Activated CD8-positive, alpha-beta memory T cell treated with anti-CD3 and anti-CD28 coated beads, Interleukin-2, amount 10 ng/mL, durations not matched to agents 7 days and 5 days (primary cell): ENCODE measurements at regions of chr6 and their contacts with region 1.

Region 1: GRCh38 chr6:43143235-43144124 is 27.6 kb upstream of the SRF start:
- DNase-seq: peak; percentile 85
- ATAC-seq: peak; percentile 97
- H3K4me3 Mint-ChIP-seq: no peak overlapping the region
- H3K27ac Mint-ChIP-seq: peak overlapping the region; percentile 50
- H3K4me1 Mint-ChIP-seq: peaks cover 18% of the 10 kb centered on the region
- H3K27me3 Mint-ChIP-seq: peaks cover 3% of the 10 kb centered on the region

Region 2: DNA sequence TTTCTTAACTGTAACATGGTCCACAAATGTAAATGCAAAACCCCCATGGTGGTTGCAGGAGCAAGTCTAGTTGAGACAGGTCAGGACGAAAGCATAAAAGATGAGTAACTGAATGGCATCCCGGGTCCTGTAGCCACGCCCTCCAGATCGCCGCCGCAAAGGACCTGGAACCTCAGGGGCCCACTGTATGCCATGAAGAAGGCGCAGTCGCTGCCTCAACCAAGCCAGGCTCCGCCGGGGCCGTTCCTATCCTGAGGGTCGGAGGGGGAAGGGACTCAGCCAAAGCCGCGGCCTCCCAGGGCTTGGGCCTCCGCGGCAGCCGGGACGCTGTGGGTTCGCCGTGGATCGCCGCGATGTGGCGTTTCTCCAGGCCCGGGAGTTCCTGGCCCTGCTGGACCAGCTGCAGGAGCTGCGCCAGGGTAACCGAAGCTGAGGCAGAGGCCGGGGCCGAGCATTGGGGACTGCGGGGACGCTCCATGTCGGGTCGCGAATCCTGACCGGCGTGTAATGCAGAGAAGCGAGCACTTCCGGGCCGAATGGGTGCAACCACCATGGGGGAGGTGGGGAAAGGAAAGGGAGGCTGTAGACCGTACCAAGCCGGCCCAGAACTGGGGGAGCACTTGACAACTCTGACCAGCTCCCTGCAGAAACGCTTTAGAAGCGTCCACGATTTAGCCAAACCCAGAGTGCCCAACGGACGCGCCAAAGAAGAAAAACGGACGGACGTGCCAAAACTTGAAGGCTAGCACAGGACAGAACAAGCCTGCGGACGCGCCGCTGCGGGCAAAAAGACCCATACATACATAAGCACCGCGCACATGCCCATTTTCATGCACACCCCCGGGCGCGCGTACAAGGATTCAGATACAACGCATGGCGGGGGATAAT is 252.9 kb before region 1 on chr6:
- CTCF ChIA-PET with region 1: interaction called, 10 read pairs
- DNase-seq: peak; percentile 96
- ATAC-seq: peak; percentile 95
- H3K4me3 Mint-ChIP-seq: peak overlapping the region; percentile 83
- H3K27ac Mint-ChIP-seq: peak overlapping the region; percentile 95
- H3K4me1 Mint-ChIP-seq: peaks cover 31% of the 10 kb centered on the region
- H3K27me3 Mint-ChIP-seq: no peaks in the 10 kb centered on the region

Region 3: DNA sequence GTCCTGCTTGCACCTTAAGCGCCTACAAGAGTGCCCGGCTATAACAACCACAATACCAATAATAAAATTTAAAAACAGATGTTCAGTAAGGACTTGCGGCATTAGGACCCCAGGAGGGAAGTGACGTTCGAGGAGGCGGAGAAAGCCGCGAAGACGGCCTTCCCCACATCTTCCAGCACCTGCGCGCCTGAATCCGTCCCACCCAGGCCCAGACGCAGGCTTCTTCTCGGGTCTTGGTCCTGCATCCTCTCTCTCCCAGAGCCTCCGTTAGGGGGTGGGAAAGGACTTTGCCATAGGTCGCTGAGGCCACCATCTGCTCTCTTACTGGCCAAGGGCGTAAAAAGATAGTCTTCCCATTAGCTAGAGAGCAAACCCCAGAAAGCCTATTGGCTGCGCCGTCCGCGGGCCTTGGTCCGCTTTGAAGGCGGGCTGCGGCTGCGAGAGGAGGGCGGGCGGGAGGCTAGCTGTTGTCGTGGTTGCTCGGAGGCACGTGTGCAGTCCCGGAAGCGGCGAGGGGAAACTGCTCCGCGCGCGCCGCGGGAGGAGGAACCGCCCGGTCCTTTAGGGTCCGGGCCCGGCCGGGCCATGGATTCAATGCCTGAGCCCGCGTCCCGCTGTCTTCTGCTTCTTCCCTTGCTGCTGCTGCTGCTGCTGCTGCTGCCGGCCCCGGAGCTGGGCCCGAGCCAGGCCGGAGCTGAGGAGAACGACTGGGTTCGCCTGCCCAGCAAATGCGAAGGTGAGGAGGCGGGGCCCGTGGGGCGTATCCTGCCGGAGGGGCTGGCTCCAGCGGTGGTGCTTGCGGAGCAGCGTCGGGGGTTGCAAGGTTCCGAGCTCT is 214.3 kb before region 1 on chr6 and contains the start of gene CNPY3:
- CTCF ChIA-PET with region 1: interaction called, 22 read pairs
- DNase-seq: peak; percentile 99
- ATAC-seq: peak; percentile 86
- H3K4me3 Mint-ChIP-seq: peak within 1 kb of the TSS; percentile 93
- H3K27ac Mint-ChIP-seq: peak within 1 kb of the TSS; percentile 92
- H3K4me1 Mint-ChIP-seq: peaks cover 38% of the 10 kb centered on the region
- H3K27me3 Mint-ChIP-seq: no peaks in the 10 kb centered on the region
- total RNA-seq, gene CNPY3: 44.1 to 56.4 TPM

Region 4: GRCh38 chr6:43013843-43014433 is 129.5 kb before region 1 on chr6 and contains the starts of genes KLHDC3 and MEA1:
- CTCF ChIA-PET with region 1: interaction called, 15 read pairs
- DNase-seq: peak; percentile 100
- ATAC-seq: peak; percentile 93
- H3K4me3 Mint-ChIP-seq: peak within 1 kb of the TSS; percentile 96
- H3K27ac Mint-ChIP-seq: peak within 1 kb of the TSS; percentile 83
- H3K4me1 Mint-ChIP-seq: peaks cover 41% of the 10 kb centered on the region
- H3K27me3 Mint-ChIP-seq: no peaks in the 10 kb centered on the region
- total RNA-seq, gene KLHDC3: 62.6 to 75.1 TPM
- total RNA-seq, gene MEA1: 61.8 to 75.2 TPM

Region 5: DNA sequence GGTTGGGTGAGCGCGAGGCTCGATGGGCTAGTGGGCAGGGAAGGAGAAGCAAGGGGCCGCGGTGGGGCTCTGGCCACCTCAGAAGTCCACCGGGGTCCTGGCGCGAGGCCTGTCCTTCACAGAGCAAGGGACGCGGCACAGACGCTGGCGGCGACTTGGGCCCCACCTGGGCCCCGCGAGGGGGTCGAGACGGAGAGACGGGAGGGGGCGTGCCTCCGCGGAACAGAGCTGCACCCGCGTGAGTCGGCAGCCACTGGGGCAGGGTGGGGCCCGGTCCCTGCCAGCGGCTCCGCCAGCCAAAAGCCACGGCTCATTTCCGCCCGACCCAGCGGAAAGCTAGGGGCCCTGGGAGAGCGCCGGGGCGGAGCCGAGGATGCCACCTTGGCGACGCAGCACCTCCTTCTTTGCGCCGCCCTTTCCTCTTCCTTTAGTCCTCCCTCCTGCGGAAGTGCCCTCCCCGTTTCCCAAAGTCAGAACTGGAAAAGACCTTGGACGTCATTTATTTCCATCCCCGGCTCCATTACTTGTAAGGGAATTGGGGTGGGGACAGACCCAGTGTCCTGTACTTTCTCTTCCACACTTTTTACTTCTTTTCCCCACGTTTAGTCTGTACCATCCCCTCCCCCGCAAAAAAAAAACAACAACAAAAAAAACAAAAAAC is 89.8 kb before region 1 on chr6 and contains the start of gene CUL7:
- CTCF ChIA-PET with region 1: interaction called, 11 read pairs
- DNase-seq: peak; percentile 95
- ATAC-seq: peak; percentile 99
- H3K4me3 Mint-ChIP-seq: peak within 1 kb of the TSS; percentile 92
- H3K27ac Mint-ChIP-seq: peak within 1 kb of the TSS; percentile 98
- H3K4me1 Mint-ChIP-seq: peaks cover 40% of the 10 kb centered on the region
- H3K27me3 Mint-ChIP-seq: no peaks in the 10 kb centered on the region
- total RNA-seq, gene CUL7: 10.4 to 12.0 TPM

Region 6: DNA sequence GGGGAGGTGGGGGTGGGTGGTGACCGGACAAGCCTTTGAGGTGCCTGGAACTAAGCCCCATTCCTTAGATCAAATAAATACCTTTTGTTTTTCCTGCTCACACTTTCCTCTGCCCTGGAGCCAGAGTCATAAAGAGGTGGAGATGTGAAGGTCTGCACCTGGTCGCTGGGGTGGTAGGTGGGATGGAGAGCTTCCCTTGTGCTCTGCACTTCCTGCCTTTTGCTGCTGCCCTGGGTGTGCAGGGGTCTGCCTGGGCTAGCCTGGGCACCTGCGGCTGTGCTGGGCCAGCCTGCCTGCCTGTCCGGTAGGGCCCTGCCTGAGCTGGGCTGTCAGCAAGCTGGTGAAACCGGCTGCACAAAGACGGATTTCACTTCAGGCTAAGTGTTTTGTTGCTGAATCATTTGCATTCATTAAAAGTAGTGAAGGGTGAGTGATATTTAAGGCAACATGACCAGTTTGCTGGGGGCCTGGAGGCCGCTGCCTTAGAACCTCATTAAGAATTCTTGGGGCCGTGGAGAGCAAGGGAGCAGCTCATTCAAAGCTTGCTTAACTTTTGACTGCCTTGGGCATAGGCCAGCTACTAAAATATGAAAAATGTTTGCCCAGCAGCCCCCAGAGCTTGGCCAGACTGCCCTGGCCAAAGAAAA is 46.9 kb before region 1 on chr6:
- CTCF ChIA-PET with region 1: interaction called, 11 read pairs
- DNase-seq: no peak
- ATAC-seq: no peak
- H3K4me3 Mint-ChIP-seq: no peak overlapping the region
- H3K27ac Mint-ChIP-seq: no peak overlapping the region
- H3K4me1 Mint-ChIP-seq: peaks cover 16% of the 10 kb centered on the region
- H3K27me3 Mint-ChIP-seq: no peaks in the 10 kb centered on the region

Region 7: DNA sequence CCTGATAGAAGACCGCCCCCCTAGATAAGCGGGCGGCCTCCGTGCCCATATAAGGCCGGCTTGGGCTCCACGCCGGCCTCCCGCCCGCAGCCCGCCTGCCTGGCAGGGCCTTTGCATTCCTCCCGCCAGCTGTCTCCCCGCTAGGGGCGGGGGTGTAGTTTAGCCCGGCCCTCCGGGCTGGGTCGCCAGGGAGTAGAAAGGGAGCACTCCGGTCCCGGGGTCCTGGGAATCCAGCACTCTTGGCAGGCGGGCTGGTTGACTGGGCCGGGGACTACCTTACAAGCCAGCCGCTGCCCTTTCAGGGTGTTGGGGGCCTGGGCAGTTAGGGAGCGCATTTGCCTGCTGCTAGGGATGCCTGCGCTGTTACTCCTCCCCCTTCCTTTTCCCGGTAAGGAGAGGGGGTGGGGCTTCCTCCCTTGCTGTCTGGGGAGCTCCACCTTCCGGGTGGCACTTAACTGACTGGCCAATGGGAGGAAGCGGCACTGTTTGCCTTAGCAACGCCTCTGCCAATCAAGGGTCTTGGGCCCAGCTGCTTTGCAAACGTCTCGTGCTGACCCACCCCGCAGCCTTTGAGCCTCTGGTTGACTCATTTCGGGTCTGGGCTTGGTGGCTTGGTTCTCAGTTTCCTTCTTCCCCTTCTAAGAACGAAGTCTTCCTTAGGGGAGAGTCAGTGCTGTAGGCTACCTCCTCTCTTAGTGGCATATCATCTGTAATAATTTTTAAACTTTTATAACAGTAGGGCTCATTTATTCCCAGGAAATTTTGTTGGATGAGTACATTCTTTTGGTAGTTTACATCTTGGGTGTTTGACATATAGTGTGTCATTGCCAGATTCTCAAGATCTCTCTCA is 31.0 kb after region 1 on chr6:
- CTCF ChIA-PET with region 1: interaction called, 10 read pairs
- DNase-seq: peak; percentile 100
- ATAC-seq: peak; percentile 71
- H3K4me3 Mint-ChIP-seq: peak overlapping the region; percentile 100
- H3K27ac Mint-ChIP-seq: peak overlapping the region; percentile 91
- H3K4me1 Mint-ChIP-seq: peaks cover 51% of the 10 kb centered on the region
- H3K27me3 Mint-ChIP-seq: no peaks in the 10 kb centered on the region

Region 8: DNA sequence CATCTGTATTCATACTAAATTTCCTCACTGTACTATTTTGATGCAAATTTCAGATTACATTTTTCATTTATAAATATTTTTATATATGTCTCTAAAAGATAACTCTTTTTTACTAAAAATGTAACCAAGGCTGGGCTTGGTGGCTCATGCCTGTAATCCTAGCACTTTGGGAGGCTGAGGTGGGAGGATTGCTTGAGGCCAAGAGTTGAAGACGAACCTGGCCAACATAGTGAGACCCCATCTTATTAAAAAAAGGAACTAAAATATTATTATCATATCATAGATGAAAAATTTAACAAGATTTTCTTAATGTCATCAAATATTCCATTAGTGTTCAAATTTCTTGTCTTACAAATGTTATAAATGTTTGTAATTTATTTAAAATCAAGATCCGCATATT is 92.4 kb after region 1 on chr6:
- CTCF ChIA-PET with region 1: no interaction called
- DNase-seq: no peak
- ATAC-seq: no peak
- H3K4me3 Mint-ChIP-seq: no peak overlapping the region
- H3K27ac Mint-ChIP-seq: no peak overlapping the region
- H3K4me1 Mint-ChIP-seq: peaks cover 2% of the 10 kb centered on the region
- H3K27me3 Mint-ChIP-seq: peaks cover 38% of the 10 kb centered on the region

Region 9: DNA sequence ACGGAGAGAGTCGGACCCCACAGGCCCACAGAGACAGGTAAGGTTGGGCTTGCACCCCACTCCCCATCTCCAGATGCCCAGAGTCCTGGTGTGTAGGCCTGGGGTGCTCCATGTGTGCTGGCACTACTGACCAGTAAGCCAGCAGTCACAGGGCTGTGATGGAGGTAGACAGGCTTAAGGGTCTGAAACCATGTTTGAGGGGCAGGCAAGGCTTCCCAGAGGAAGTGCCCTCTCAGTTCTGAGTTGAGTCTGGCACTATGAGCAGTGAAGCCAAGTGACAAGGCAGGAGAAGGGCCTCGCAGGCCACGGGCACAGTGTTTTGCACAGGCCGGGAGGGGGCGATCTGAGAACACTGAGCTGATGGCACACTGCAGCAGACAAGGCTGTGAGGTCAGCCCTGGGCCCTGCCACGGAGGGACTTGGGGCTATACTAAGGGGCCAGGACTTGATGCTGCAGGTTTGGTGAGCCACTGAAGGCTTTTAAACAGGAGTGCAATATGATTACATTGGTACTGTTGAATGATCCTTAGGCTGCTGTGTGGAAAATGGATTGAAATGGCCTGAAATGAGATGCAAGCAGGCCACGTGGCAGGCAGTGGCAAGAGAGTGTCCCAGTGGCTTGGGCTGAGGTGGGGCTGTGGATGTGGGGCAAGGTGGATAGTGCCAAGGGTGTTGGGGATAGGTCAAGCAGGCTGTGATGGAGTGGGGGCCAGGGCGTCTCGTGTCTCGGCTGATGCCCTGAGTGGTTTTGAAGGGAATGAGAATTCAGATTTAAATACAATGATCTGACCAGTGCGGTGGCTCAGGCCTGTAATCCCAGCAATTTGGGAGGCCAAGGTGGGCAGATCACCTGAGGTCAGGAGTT is 120.1 kb after region 1 on chr6:
- CTCF ChIA-PET with region 1: no interaction called
- DNase-seq: peak; percentile 85
- ATAC-seq: peak; percentile 96
- H3K4me3 Mint-ChIP-seq: no peak overlapping the region
- H3K27ac Mint-ChIP-seq: no peak overlapping the region
- H3K4me1 Mint-ChIP-seq: no peaks in the 10 kb centered on the region
- H3K27me3 Mint-ChIP-seq: peaks cover 10% of the 10 kb centered on the region

Region 10: GRCh38 chr6:43286980-43287716 is 143.7 kb after region 1 on chr6:
- CTCF ChIA-PET with region 1: no interaction called
- DNase-seq: no peak
- ATAC-seq: no peak
- H3K4me3 Mint-ChIP-seq: no peak overlapping the region
- H3K27ac Mint-ChIP-seq: no peak overlapping the region
- H3K4me1 Mint-ChIP-seq: no peaks in the 10 kb centered on the region
- H3K27me3 Mint-ChIP-seq: peaks cover 24% of the 10 kb centered on the region